ENCODE measurements at regions of chr11 and their contacts with region 1.

Region 1: DNA sequence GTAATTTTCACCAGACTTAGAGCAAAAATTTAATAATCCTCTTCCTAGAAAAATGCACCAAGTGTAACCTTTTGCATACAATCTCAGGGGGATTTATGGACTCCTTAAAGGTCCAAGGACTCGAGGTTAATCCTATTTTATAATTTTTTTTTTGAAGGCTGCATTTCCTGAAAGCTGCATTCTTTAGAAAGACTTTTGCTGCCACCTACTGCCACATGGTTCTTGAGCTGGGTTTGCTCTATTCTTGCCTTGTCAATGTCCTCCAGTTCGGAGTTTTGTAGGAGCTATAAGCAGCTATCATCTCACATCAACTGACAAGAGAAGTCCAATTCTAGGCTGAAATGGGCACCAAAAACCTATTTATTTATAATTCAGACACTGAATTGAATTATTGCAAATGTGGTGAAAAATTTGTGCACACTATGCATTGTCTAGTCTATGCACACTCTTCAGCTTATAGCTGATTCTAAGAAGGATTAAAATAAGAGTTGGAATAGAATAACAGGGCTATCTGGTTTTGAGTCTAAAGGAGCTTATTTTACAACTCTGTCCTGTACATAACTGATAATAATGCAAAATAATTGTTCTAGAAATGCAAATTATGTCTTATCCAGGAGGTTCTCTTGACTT is 31.3 kb downstream of the TRAF6 start:
- DNase-seq: peak; percentile 38
- H3K4me3 Mint-ChIP-seq: no peak overlapping the region
- H3K27ac Mint-ChIP-seq: no peak overlapping the region
- H3K4me1 Mint-ChIP-seq: peaks cover 12% of the 10 kb centered on the region
- H3K27me3 Mint-ChIP-seq: no peaks in the 10 kb centered on the region

Region 2: DNA sequence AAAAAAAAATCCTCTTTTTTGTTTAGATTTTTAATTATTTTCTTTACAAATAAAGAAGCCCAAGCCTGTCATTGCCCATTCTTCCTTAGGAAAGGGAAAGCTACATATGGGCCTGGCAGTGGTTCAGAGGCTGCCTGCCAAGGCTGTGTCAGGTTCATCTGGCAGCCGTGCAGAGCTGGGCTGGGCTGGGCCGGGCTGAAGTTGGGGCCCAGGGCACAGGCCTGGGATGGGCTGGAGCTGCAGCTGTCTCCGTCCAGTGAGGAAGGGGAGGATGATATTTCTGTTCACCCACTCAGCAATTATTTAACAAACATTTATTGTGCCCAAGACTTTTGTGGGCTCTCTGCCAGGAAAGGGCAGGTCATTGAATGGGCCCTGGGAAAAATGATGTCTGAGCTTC is 178.2 kb before region 1 on chr11:
- CTCF ChIA-PET with region 1: interaction called, 12 read pairs
- POLR2A ChIA-PET with region 1: no interaction called
- intact Hi-C with region 1: loop called (anchors 5 kb)
- DNase-seq: no peak
- H3K4me3 Mint-ChIP-seq: no peak overlapping the region
- H3K27ac Mint-ChIP-seq: no peak overlapping the region
- H3K4me1 Mint-ChIP-seq: no peaks in the 10 kb centered on the region
- H3K27me3 Mint-ChIP-seq: no peaks in the 10 kb centered on the region

Region 3: GRCh38 chr11:36306888-36307287 is 171.9 kb before region 1 on chr11:
- CTCF ChIA-PET with region 1: interaction called, 8 read pairs
- POLR2A ChIA-PET with region 1: no interaction called
- intact Hi-C with region 1: loop called (anchors 5 kb)
- DNase-seq: peak; percentile 31
- H3K4me3 Mint-ChIP-seq: no peak overlapping the region
- H3K27ac Mint-ChIP-seq: no peak overlapping the region
- H3K4me1 Mint-ChIP-seq: peaks cover 5% of the 10 kb centered on the region
- H3K27me3 Mint-ChIP-seq: peaks cover 4% of the 10 kb centered on the region

Region 4: DNA sequence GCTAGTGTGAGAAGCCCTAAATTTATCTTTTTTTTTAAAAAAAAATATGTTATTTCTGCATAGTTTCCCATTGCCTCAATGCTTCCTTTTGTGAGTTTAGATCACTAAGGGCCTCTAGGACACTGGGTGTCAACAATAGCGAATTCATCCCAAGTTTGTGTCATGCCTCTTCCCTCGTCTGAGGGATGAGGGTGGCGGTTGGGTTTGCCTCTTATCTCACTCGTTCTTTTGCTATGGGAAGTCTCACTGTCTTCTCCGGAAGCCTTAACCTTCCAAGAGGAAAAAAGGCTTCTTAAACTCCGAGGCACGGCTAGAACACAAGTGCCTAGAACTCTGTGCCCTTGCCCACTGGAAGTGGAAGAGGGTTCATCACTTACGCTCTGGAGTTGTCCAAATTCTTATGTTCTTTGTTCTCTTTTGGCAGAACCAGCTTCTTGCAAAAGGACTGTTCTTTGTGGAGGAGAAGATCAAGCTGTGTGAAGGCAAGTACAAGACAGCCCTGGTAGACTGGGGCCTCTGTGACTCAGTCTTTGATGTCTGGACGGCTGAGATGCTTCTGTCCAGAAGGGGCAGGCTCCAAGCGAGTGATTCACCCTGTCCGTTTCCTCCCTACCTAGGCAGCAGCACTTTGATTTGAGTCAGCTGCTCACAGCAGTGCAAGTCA is 47.3 kb before region 1 on chr11:
- CTCF ChIA-PET with region 1: no interaction called
- POLR2A ChIA-PET with region 1: no interaction called
- intact Hi-C with region 1: no loop called
- DNase-seq: peak; percentile 81
- H3K4me3 Mint-ChIP-seq: peak overlapping the region; percentile 31
- H3K27ac Mint-ChIP-seq: peak overlapping the region; percentile 80
- H3K4me1 Mint-ChIP-seq: peaks cover 31% of the 10 kb centered on the region
- H3K27me3 Mint-ChIP-seq: no peaks in the 10 kb centered on the region

Measured in activated CD4-positive, alpha-beta memory T cell treated with anti-CD3 and anti-CD28 coated beads for 36 hours (primary cell).